ENCODE measurements at regions of chr5 and their contacts with region 1.

Region 1: GRCh38 chr5:131548176-131548575 is 86.9 kb downstream of the RAPGEF6 start:
- DNase-seq: peak in 7 of 9 donors; percentile 60 to 82 (median 68)
- ATAC-seq: peak; percentile 97
- H3K4me3 ChIP-seq: peak overlapping the region; percentile 63
- H3K4me3 Mint-ChIP-seq: peak overlapping the region; percentile 93 to 100 (median 98)
- H3K27ac ChIP-seq: peak overlapping the region; percentile 83
- H3K27ac Mint-ChIP-seq: peak overlapping the region; percentile 92 to 99 (median 97)
- H3K4me1 ChIP-seq: peaks cover 6 to 44% of the 10 kb centered on the region in 2 donors
- H3K4me1 Mint-ChIP-seq: peaks cover 28 to 71% (median 58%) of the 10 kb centered on the region in 7 donors
- H3K27me3 ChIP-seq: no peaks in the 10 kb centered on the region
- H3K27me3 Mint-ChIP-seq: no peaks in the 10 kb centered on the region

Region 2: GRCh38 chr5:131528682-131529081 is 19.5 kb before region 1 on chr5:
- CTCF ChIA-PET with region 1: interaction called, 6 read pairs
- POLR2A ChIA-PET with region 1: interaction called, 144 read pairs
- intact Hi-C with region 1: loop called (anchors 1 kb)
- DNase-seq: no peak
- ATAC-seq: no peak
- H3K4me3 ChIP-seq: peak overlapping the region; percentile 18
- H3K4me3 Mint-ChIP-seq: peak overlapping the region; percentile 16 to 85 (median 67)
- H3K27ac ChIP-seq: peak overlapping the region; percentile 11
- H3K27ac Mint-ChIP-seq: peak overlapping the region; percentile 53 to 91 (median 81)
- H3K4me1 ChIP-seq: peaks cover 35 to 77% of the 10 kb centered on the region in 2 donors
- H3K4me1 Mint-ChIP-seq: peaks cover 49 to 91% (median 79%) of the 10 kb centered on the region in 7 donors
- H3K27me3 ChIP-seq: no peaks in the 10 kb centered on the region
- H3K27me3 Mint-ChIP-seq: no peaks in the 10 kb centered on the region

Region 3: DNA sequence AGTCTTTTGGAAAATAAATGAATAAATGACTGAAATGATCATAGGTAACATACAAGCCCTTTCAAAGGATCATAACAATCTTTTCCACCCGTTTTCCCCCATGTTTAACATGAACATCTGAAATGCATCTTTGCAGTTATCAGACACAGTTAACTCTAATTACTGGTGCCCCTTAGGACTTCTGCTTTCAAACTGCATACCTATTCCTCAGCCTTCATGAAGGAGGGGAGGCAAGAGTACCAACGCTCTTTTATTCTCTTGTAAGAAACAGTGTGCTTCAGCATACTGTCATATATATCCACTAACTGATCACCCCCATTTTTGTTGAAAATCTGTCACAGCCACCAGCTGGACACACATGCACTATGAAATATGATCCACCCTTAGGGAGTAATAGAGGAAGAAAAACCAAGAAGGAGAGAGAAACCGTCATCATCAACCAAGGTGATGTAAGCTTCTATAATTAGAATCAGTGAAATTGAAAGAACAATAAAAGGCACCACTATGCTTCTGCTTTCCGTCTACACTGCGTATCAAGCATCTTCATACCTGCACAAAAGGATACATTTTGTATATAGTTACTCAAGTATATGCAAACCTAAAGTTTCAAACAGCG is 11.9 kb before region 1 on chr5:
- CTCF ChIA-PET with region 1: interaction called, 6 read pairs
- POLR2A ChIA-PET with region 1: interaction called, 144 read pairs
- intact Hi-C with region 1: loop called (anchors 1 kb)
- DNase-seq: peak in 6 of 9 donors; percentile 33 to 61 (median 56)
- ATAC-seq: peak; percentile 65
- H3K4me3 ChIP-seq: peak overlapping the region; percentile 1
- H3K4me3 Mint-ChIP-seq: peak overlapping the region; percentile 63 to 82 (median 76)
- H3K27ac ChIP-seq: peak overlapping the region; percentile 72
- H3K27ac Mint-ChIP-seq: peak overlapping the region; percentile 73 to 93 (median 86)
- H3K4me1 ChIP-seq: peaks cover 27 to 69% of the 10 kb centered on the region in 2 donors
- H3K4me1 Mint-ChIP-seq: peaks cover 51 to 99% (median 86%) of the 10 kb centered on the region in 7 donors
- H3K27me3 ChIP-seq: no peaks in the 10 kb centered on the region
- H3K27me3 Mint-ChIP-seq: no peaks in the 10 kb centered on the region

Region 4: DNA sequence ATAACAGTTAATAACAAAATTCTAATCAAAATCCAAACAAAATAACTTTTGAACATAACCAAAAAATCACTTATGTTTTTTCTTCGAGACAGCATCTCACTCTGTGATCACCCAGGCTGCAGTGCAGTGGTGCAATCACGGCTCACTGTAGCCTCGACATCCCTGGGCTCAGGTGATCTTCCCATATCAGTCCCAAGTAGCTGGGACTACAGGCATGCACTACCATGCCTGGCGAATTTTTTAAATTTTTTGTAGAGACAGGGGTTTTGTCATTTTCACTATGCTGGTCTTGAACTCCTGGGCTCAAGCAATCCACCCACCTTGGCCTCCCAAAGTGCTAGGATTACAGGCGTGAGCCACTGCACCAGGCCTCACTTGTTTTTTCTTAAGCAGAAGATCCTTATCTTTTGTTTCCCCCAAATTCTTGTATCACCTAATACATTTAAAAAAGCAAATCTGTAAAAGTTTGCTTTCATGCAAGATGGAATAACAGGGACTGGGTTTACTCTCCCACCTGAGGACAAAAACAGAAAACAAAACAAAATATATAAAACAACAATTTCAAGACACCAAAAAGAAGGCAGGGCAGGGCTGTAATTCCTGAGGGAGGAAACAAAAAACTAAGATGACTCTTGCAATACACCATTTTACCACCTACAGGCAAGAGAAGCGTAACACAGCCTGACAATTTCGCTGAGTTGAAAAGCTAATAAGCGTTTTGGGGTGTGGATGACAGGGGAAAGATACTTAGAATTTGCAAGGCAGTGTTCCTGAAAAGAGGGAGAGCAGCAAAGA is 15.5 kb after region 1 on chr5:
- CTCF ChIA-PET with region 1: interaction called, 3 read pairs
- POLR2A ChIA-PET with region 1: interaction called, 11 read pairs
- intact Hi-C with region 1: loop called in 1 of 2 experiments (anchors 2 kb)
- DNase-seq: peak in 1 of 9 donors; percentile 10
- ATAC-seq: no peak
- H3K4me3 ChIP-seq: no peak overlapping the region
- H3K4me3 Mint-ChIP-seq: peak overlapping the region in 5 of 10 donors; percentile 1 to 33 (median 19)
- H3K27ac ChIP-seq: no peak overlapping the region
- H3K27ac Mint-ChIP-seq: peak overlapping the region in 7 of 9 donors; percentile 10 to 77 (median 57)
- H3K4me1 ChIP-seq: peaks cover 0 to 11% of the 10 kb centered on the region in 2 donors
- H3K4me1 Mint-ChIP-seq: peaks cover 18 to 74% (median 60%) of the 10 kb centered on the region in 7 donors
- H3K27me3 ChIP-seq: no peaks in the 10 kb centered on the region
- H3K27me3 Mint-ChIP-seq: no peaks in the 10 kb centered on the region

Region 5: DNA sequence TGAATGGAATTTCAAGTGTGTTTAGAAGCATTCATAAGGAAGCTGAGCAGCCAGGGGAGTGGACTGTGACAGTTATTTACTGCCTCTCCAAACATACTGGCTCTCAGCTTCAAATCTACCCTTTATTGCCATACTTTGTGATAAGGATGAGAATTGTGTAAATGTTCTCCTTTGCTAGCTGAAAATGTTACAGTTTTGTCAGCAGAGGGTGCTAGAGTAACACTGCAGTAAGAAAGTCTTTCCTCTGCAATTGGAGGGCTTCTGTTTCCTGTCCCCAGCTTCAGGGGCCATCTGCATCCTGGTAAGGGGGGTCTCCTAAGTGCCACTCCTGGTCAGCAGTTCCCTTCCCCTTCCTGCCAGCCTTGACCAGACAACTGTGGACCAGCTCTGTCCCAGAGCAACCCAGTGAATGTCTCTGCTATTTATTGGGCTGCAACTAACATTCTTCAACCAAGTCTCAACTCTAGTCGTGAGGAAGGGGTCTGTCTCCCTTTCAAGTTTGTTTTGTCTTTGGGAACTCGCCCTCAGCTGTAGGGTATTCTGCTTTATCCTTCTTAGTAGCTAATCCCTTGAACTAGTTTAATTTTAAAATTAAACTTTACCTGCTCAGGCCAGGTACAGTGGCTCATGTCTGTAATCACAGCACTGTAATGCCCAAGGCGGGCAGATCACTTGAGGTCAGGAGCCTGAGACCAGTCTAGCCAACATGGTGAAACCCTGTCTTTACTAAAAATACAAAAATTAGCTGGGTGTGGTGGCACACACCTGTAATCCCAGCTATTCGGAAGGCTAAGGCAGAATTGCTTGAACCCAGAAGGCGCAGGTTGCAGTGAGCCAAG is 41.6 kb after region 1 on chr5:
- CTCF ChIA-PET with region 1: interaction called, 5 read pairs
- POLR2A ChIA-PET with region 1: interaction called, 4 read pairs
- intact Hi-C with region 1: loop called in 1 of 2 experiments (anchors 1 kb)
- DNase-seq: peak in 8 of 9 donors; percentile 8 to 71 (median 62)
- ATAC-seq: peak; percentile 80
- H3K4me3 ChIP-seq: no peak overlapping the region
- H3K4me3 Mint-ChIP-seq: no peak overlapping the region
- H3K27ac ChIP-seq: peak overlapping the region; percentile 9
- H3K27ac Mint-ChIP-seq: peak overlapping the region; percentile 10 to 75 (median 52)
- H3K4me1 ChIP-seq: peaks cover 4 to 5% of the 10 kb centered on the region in 2 donors
- H3K4me1 Mint-ChIP-seq: peaks cover 21 to 63% (median 58%) of the 10 kb centered on the region in 7 donors
- H3K27me3 ChIP-seq: no peaks in the 10 kb centered on the region
- H3K27me3 Mint-ChIP-seq: no peaks in the 10 kb centered on the region

Region 6: DNA sequence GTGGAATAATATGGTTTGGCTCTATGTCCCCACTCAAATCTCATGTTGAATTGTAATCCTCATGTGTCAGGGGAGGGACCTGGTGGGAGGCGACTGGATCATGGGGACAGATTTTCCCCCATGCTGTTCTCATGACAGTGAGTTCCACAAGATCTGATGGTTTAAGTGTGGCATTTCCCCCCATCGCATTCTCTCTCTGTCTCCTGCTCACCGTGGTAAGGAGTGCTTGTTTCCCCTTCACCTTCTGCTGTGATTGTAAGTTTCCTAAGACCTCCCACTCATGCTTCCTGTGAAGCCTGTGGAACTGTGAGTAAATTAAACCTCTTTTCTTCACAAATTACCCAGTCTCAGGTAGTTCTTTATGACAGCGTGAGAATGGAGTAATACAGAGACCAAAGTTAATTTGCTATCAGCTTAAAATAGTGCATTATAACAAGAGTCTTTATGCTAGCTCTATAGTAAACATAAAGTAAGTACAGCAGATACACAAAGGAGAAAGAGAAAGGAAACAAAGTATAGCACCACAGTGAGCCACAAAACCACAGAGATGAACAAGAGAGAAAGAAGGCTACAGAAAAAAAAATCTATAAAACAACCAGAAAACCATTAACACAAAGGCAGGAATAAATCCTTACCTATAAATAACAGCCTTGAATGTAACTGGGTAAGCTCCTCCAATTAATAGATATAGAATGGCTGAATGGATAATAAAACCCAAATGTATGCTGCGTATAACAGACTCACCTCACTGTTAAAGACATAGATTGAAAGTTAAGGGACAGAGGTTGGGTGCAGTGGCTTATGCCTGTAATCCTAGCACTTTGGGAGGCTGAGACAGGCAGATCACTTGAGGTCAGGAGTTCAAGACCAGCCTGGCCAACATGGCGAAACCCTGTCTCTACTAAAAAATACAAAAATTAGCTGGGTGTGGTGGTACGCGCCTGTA is 47.2 kb after region 1 on chr5:
- CTCF ChIA-PET with region 1: interaction called, 5 read pairs
- POLR2A ChIA-PET with region 1: interaction called, 4 read pairs
- intact Hi-C with region 1: loop called in 1 of 2 experiments (anchors 1 kb)
- DNase-seq: peak in 7 of 9 donors; percentile 26 to 56 (median 52)
- ATAC-seq: peak; percentile 90
- H3K4me3 ChIP-seq: no peak overlapping the region
- H3K4me3 Mint-ChIP-seq: peak overlapping the region; percentile 3 to 76 (median 64)
- H3K27ac ChIP-seq: peak overlapping the region; percentile 29
- H3K27ac Mint-ChIP-seq: peak overlapping the region; percentile 55 to 84 (median 77)
- H3K4me1 ChIP-seq: peaks cover 20 to 24% of the 10 kb centered on the region in 2 donors
- H3K4me1 Mint-ChIP-seq: peaks cover 29 to 86% (median 78%) of the 10 kb centered on the region in 7 donors
- H3K27me3 ChIP-seq: no peaks in the 10 kb centered on the region
- H3K27me3 Mint-ChIP-seq: no peaks in the 10 kb centered on the region